ENCODE measurements at regions of chr7 and their contacts with region 1.

Region 1: GRCh38 chr7:99102809-99103690 is 40.9 kb downstream of the SMURF1 start:
- DNase-seq: peak; percentile 52
- H3K4me3 Mint-ChIP-seq: no peak overlapping the region
- H3K27ac Mint-ChIP-seq: peak overlapping the region; percentile 61
- H3K4me1 Mint-ChIP-seq: peaks cover 60% of the 10 kb centered on the region
- H3K27me3 Mint-ChIP-seq: no peaks in the 10 kb centered on the region

Region 2: DNA sequence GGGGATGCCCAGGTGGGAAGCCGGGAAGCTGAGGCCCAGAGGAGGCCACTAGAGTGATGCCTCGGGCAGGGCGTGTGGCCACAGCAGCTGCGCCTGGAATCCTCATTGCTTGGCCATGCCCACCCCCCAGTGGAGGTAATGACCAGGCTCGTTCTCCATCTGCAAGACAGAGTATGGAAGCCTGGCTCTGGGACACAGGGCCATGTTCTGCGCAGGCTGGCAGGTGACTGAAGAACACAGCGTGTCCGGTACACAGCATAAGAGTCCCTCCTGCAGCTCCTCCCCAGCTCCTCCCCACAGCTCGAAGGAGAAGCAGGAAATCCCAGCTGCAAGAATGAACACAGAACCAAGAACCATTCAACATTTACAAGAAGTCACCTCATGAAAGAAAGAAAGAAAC is 23.9 kb before region 1 on chr7:
- CTCF ChIA-PET with region 1: no interaction called
- intact Hi-C with region 1: loop called (anchors 2 kb)
- DNase-seq: peak; percentile 68
- H3K4me3 Mint-ChIP-seq: peak overlapping the region; percentile 10
- H3K27ac Mint-ChIP-seq: peak overlapping the region; percentile 60
- H3K4me1 Mint-ChIP-seq: peaks cover 28% of the 10 kb centered on the region
- H3K27me3 Mint-ChIP-seq: no peaks in the 10 kb centered on the region

Region 3: DNA sequence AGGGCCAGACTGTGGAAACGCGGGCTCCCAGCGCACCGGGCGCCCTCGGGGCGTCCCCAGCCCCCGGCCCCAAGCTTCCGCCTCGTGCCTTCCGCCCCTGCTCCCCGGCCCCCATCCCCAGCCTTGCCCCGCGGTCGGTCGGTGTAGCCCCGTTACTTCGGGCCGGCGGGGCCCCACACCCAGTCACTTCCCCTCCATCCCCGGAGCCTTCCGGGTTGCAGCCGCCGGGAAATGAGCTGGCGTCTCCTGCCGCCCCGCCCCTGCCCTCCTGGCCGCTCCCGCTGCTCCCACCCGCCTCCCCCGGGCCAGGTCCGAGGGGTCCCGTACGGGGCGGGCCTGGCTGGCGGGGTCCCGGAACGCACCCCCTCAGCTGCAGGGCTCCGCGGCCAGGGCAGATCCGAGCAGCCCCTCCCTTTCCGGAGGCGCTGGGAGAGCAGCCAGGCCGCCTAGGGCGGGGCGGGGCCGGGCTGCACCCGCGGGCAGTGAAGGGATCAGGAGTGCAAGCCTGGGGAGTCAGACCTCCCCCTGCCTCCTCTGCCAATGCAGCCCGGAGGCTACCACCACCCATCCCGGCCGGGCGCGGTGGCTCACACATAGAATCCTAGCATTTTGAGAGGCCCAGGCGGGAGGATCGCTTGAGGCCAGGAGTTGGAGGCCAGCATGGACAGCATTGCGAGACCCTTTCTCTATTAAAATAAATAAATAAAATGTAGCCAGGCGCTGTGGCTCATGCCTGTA is 272.2 kb after region 1 on chr7:
- CTCF ChIA-PET with region 1: no interaction called
- intact Hi-C with region 1: no loop called
- DNase-seq: peak; percentile 83
- H3K4me3 Mint-ChIP-seq: peak overlapping the region; percentile 79
- H3K27ac Mint-ChIP-seq: peak overlapping the region; percentile 87
- H3K4me1 Mint-ChIP-seq: peaks cover 31% of the 10 kb centered on the region
- H3K27me3 Mint-ChIP-seq: no peaks in the 10 kb centered on the region

Measured in activated naive CD4-positive, alpha-beta T cell treated with anti-CD3 and anti-CD28 coated beads for 36 hours (primary cell).